ENCODE measurements at regions of chr22 and their contacts with region 1.

Region 1: GRCh38 chr22:36180038-36180880 is 19.7 kb upstream of the APOL3 start:
- DNase-seq: peak; percentile 71 to 90 (median 80)
- H3K4me3 ChIP-seq: no peak overlapping the region
- H3K4me3 Mint-ChIP-seq: no peak overlapping the region
- H3K27ac ChIP-seq: no peak overlapping the region
- H3K27ac Mint-ChIP-seq: peak overlapping the region in 2 of 8 donors; percentile 3 to 48
- H3K4me1 ChIP-seq: peaks cover 3% of the 10 kb centered on the region
- H3K4me1 Mint-ChIP-seq: peaks cover 4 to 7% (median 5%) of the 10 kb centered on the region in 3 donors
- H3K27me3 ChIP-seq: no peaks in the 10 kb centered on the region
- H3K27me3 Mint-ChIP-seq: no peaks in the 10 kb centered on the region

Region 2: DNA sequence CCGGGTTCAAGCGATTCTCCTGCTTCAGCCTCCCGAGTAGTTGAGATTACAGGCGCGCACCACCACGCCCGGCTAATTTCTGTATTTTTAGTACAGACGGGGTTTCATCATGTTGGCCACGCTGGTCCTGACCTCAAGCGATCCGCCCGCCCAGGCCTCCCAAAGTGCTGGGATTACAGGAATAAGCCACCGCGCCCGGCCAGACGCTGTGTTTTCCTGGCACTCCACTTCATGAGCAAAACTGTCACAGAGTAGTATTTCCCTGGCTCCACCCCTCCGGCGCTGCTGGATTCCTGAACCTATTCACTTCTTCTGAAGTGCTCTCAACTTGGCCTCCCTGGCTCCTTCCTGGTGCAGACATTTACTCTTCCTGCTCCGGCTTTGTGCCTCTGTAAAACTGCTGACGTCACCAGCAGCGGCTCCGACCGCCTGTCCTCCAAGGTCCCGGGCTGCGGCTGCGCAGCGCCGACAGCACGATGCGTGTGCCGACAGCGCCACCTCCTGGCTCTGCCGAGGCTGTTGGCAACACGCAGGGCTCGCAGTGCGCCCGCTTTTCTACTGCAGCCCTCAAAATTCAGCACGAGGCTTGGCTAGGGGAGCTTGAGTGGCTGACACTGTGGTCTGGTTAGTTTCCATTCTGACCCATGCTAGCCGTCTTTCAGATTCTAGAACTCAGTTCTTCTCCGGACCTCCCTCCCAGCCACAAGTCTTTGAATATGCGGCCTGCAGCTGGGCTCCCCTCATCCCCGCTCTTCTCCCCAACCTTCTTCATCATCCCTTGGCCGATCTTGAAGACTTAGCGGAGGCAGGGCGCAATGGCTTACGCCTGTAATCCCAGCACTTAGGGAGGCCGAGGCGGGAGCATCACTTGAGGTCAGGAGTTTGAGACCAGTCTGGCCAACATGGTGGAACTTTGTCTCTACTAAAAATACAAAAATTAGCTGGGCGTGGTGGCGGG is 56.3 kb before region 1 on chr22:
- CTCF ChIA-PET with region 1: interaction called, 13 read pairs
- POLR2A ChIA-PET with region 1: no interaction called
- DNase-seq: peak; percentile 88 to 94 (median 89)
- H3K4me3 ChIP-seq: peak overlapping the region; percentile 60
- H3K4me3 Mint-ChIP-seq: peak overlapping the region; percentile 51 to 90 (median 87)
- H3K27ac ChIP-seq: peak overlapping the region; percentile 20
- H3K27ac Mint-ChIP-seq: peak overlapping the region; percentile 52 to 98 (median 93)
- H3K4me1 ChIP-seq: peaks cover 5% of the 10 kb centered on the region
- H3K4me1 Mint-ChIP-seq: peaks cover 9 to 15% (median 13%) of the 10 kb centered on the region in 3 donors
- H3K27me3 ChIP-seq: no peaks in the 10 kb centered on the region
- H3K27me3 Mint-ChIP-seq: no peaks in the 10 kb centered on the region

Region 3: GRCh38 chr22:36144886-36145541 is 35.2 kb before region 1 on chr22:
- CTCF ChIA-PET with region 1: interaction called, 15 read pairs
- POLR2A ChIA-PET with region 1: no interaction called
- DNase-seq: peak in 2 of 5 donors; percentile 26 to 46
- H3K4me3 ChIP-seq: no peak overlapping the region
- H3K4me3 Mint-ChIP-seq: no peak overlapping the region
- H3K27ac ChIP-seq: no peak overlapping the region
- H3K27ac Mint-ChIP-seq: peak overlapping the region; percentile 14 to 98 (median 84)
- H3K4me1 ChIP-seq: peaks cover 7% of the 10 kb centered on the region
- H3K4me1 Mint-ChIP-seq: peaks cover 43 to 62% (median 45%) of the 10 kb centered on the region in 3 donors
- H3K27me3 ChIP-seq: no peaks in the 10 kb centered on the region
- H3K27me3 Mint-ChIP-seq: no peaks in the 10 kb centered on the region

Region 4: DNA sequence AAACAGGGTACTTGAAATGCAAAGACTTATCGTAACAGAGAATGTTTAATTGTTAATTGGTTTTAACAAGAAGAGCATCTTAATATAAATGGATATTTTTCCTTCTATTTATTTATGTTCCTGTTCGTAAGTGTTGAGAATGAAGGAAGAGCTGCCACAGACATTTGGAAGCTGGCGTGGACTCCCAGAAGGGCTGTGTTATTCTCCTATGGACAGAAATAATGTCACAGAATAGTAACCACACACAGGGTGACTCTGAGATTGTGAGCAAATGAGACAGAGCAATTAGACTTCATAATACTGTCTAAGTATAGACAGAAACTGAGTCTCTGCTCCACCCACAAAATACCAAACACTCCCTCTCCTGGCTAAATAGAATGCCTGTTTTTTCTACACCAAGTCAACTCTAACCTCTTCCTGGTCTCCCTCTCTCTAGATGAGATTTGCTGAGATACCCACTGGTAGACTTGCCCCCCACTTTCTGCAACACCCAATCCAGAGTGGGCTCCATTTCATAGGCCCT is 25.8 kb before region 1 on chr22:
- CTCF ChIA-PET with region 1: interaction called, 14 read pairs
- POLR2A ChIA-PET with region 1: interaction called, 3 read pairs
- DNase-seq: no peak
- H3K4me3 ChIP-seq: no peak overlapping the region
- H3K4me3 Mint-ChIP-seq: peak overlapping the region; percentile 91 to 99 (median 96)
- H3K27ac ChIP-seq: no peak overlapping the region
- H3K27ac Mint-ChIP-seq: peak overlapping the region; percentile 93 to 100 (median 98)
- H3K4me1 ChIP-seq: peaks cover 92% of the 10 kb centered on the region
- H3K4me1 Mint-ChIP-seq: peaks cover 94 to 98% (median 98%) of the 10 kb centered on the region in 3 donors
- H3K27me3 ChIP-seq: no peaks in the 10 kb centered on the region
- H3K27me3 Mint-ChIP-seq: no peaks in the 10 kb centered on the region

Region 5: DNA sequence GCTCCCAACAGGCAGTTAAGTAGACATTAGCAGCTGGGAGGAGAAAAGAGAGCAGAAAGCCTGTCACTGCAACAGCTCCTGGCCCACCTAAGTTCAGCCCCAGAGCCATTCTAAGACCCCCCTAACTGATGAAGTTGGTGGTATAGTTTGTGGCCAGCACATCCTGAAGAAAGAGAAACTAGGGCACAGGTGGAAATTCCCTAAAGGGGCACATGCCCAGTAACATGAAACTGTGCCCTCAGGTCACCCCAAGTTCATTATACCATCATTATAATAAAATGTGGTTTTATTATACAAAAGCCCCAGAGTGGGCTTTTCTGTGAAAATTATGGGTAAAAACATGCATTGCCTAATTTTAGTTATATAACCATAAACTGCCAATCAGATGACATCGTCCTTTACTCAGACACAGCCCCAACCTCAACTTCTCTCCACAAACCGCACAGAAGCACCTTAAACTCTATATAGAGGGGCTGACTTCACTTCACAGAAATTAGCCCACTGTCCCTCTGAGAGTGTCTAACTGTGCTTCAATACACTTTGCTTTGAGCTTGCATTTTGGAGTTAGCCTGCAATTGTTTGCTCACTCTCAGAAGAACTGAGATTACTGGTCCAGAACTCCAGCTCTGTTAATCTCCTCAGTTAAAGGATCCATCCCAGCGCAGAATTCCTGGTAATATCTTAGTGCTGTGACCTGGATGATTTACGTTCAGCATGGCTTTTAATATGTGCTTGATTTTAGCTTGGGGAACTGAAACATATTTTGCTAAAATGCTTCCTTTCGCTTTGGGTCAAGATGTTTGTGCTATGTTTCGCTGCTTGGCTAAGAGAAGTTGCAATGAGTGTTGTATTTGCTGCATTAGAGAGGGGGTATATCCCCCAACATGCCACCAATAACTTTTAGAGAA is 17.9 kb before region 1 on chr22:
- CTCF ChIA-PET with region 1: interaction called, 38 read pairs
- POLR2A ChIA-PET with region 1: interaction called, 3 read pairs
- DNase-seq: peak; percentile 48 to 81 (median 77)
- H3K4me3 ChIP-seq: peak overlapping the region; percentile 42
- H3K4me3 Mint-ChIP-seq: peak overlapping the region; percentile 91 to 99 (median 96)
- H3K27ac ChIP-seq: peak overlapping the region; percentile 84
- H3K27ac Mint-ChIP-seq: peak overlapping the region; percentile 93 to 100 (median 99)
- H3K4me1 ChIP-seq: peaks cover 67% of the 10 kb centered on the region
- H3K4me1 Mint-ChIP-seq: peaks cover 87 to 93% (median 90%) of the 10 kb centered on the region in 3 donors
- H3K27me3 ChIP-seq: no peaks in the 10 kb centered on the region
- H3K27me3 Mint-ChIP-seq: no peaks in the 10 kb centered on the region

Region 6: DNA sequence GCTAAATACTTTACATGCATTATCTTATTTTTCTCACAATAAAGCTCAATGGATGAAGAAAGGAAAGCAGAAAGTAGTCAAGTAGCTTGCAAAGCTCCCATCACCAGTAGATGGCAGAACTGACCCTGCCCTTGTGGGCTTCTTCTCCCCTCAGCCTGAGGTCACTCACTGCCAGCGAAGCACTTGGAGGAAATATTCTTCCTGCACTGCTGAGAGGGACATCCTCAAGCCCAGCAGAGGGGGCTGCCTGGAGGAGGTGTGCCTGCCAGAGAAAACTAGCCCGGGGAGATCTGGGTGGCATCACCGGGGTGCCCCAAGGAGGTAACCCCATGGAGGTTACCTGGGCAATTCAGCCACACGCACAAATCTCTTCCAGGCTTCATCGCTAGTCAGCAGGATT is 14.7 kb after region 1 on chr22:
- CTCF ChIA-PET with region 1: no interaction called
- POLR2A ChIA-PET with region 1: no interaction called
- DNase-seq: peak in 3 of 5 donors; percentile 19 to 65 (median 38)
- H3K4me3 ChIP-seq: no peak overlapping the region
- H3K4me3 Mint-ChIP-seq: no peak overlapping the region
- H3K27ac ChIP-seq: no peak overlapping the region
- H3K27ac Mint-ChIP-seq: peak overlapping the region in 1 of 8 donors; percentile 21
- H3K4me1 ChIP-seq: no peaks in the 10 kb centered on the region
- H3K4me1 Mint-ChIP-seq: peaks cover 6 to 13% (median 9%) of the 10 kb centered on the region in 3 donors
- H3K27me3 ChIP-seq: no peaks in the 10 kb centered on the region
- H3K27me3 Mint-ChIP-seq: peaks cover 4 to 17% of the 10 kb centered on the region in 2 donors

Region 7: DNA sequence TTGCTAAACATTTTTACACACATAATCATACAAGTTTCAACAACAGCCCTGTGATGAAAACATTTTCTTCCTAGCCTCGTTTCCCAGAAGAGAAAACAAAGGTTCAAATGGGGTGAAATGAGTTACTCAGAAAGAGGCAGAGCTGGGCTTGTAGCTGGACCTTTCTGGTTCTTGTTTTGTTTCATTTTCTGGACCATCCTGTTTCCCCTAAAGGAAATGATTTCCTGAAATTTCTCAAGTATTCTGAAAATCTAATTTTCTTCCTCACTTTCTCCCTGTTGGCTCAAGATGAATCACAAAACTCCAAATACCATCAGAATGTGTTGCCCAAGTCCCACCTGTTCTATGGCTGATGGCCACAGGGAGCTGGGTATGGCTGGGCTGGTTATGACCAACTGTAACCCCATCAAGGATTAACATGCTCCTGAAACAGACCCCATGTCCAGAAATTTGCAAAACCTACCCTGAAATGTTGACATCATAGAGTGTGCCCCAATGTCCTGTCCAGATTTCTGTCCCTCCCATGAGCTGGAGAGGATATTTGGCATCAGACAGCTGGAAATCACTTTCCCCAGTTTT is 28.0 kb after region 1 on chr22:
- CTCF ChIA-PET with region 1: no interaction called
- POLR2A ChIA-PET with region 1: no interaction called
- DNase-seq: no peak
- H3K4me3 ChIP-seq: no peak overlapping the region
- H3K4me3 Mint-ChIP-seq: no peak overlapping the region
- H3K27ac ChIP-seq: no peak overlapping the region
- H3K27ac Mint-ChIP-seq: no peak overlapping the region
- H3K4me1 ChIP-seq: no peaks in the 10 kb centered on the region
- H3K4me1 Mint-ChIP-seq: peaks cover 7 to 12% (median 10%) of the 10 kb centered on the region in 3 donors
- H3K27me3 ChIP-seq: no peaks in the 10 kb centered on the region
- H3K27me3 Mint-ChIP-seq: peaks cover 29 to 62% of the 10 kb centered on the region in 2 donors